WTC11 (cell line): ENCODE measurements at regions of chr22 and their contacts with region 1.

Region 1: DNA sequence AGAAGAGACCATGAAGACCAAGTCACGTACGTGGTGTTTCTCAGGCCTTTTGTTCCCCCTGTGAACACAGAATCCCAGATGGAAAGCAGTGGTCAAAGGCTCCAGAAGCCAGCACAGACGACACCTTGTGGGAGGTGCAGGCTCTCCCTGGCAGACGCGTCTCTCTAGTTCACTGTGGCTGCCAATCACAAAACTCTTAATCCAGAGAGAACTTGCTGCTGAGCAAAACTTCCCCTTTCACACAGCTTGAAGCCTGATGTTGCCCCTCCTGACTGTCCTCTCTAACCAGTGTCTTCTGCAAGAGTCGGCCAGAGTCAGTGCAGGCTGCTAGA is 67.1 kb downstream of the PIWIL3 start:
- DNase-seq: no peak
- ATAC-seq: peak; percentile 76
- H3K4me3 Mint-ChIP-seq: no peak overlapping the region
- H3K27ac Mint-ChIP-seq: no peak overlapping the region
- H3K4me1 Mint-ChIP-seq: peaks cover 26% of the 10 kb centered on the region
- H3K27me3 Mint-ChIP-seq: no peaks in the 10 kb centered on the region; the same call in 1 of the 2 replicates
- CTCF ChIP-seq: no peak

Region 2: GRCh38 chr22:24681236-24681635 is 26.2 kb before region 1 on chr22:
- CTCF ChIA-PET with region 1: interaction called, 10 read pairs
- POLR2A ChIA-PET with region 1: no interaction called
- DNase-seq: no peak
- ATAC-seq: no peak
- H3K4me3 Mint-ChIP-seq: no peak overlapping the region
- H3K27ac Mint-ChIP-seq: no peak overlapping the region
- H3K4me1 Mint-ChIP-seq: peaks cover 26% of the 10 kb centered on the region
- H3K27me3 Mint-ChIP-seq: peaks cover 8% of the 10 kb centered on the region
- CTCF ChIP-seq: no peak

Region 3: GRCh38 chr22:24695561-24696511 is 11.6 kb before region 1 on chr22:
- CTCF ChIA-PET with region 1: interaction called, 16 read pairs
- POLR2A ChIA-PET with region 1: no interaction called
- DNase-seq: peak; percentile 30
- ATAC-seq: peak; percentile 45
- H3K4me3 Mint-ChIP-seq: peak overlapping the region; percentile 53
- H3K27ac Mint-ChIP-seq: peak overlapping the region; percentile 84
- H3K4me1 Mint-ChIP-seq: peaks cover 77% of the 10 kb centered on the region
- H3K27me3 Mint-ChIP-seq: no peaks in the 10 kb centered on the region
- CTCF ChIP-seq: no peak

Region 4: DNA sequence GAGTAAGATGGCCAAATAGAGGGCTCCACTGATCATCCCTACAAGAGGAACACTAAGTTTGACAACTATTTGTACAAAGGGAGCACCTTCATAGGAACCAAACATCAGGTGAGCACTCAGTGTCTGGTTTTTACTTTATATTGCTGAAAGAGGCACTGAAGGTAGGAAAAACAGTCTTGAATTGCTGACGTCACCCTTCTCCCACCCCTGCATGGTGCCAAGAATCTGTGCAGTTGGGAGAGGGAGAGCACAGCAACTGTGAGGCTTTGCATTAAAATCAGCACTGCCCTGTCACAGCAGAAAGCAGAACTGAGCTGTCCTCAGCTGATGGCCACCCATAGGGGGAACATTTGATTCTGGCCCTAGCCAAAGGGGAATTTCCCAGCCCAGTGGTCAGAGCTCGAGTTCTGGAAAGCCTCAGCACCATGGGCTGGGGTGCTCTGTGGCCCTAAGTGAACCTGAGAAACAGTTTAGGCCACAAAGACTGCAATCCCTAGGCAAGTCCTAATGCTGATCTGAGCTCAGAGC is 29.2 kb after region 1 on chr22:
- CTCF ChIA-PET with region 1: interaction called, 14 read pairs
- POLR2A ChIA-PET with region 1: no interaction called
- DNase-seq: no peak
- ATAC-seq: no peak
- H3K4me3 Mint-ChIP-seq: no peak overlapping the region
- H3K27ac Mint-ChIP-seq: no peak overlapping the region
- H3K4me1 Mint-ChIP-seq: peaks cover 24% of the 10 kb centered on the region
- H3K27me3 Mint-ChIP-seq: peaks cover 2% of the 10 kb centered on the region
- CTCF ChIP-seq: no peak